Activated naive CD4-positive, alpha-beta T cell treated with anti-CD3 and anti-CD28 coated beads for 36 hours (primary cell): ENCODE measurements at regions of chr17 and their contacts with region 1.

Region 1: GRCh38 chr17:29732613-29733012 is 109.9 kb upstream of the CORO6 start:
- DNase-seq: no peak
- H3K4me3 Mint-ChIP-seq: no peak overlapping the region
- H3K27ac Mint-ChIP-seq: no peak overlapping the region
- H3K4me1 Mint-ChIP-seq: peaks cover 55% of the 10 kb centered on the region
- H3K27me3 Mint-ChIP-seq: no peaks in the 10 kb centered on the region

Region 2: DNA sequence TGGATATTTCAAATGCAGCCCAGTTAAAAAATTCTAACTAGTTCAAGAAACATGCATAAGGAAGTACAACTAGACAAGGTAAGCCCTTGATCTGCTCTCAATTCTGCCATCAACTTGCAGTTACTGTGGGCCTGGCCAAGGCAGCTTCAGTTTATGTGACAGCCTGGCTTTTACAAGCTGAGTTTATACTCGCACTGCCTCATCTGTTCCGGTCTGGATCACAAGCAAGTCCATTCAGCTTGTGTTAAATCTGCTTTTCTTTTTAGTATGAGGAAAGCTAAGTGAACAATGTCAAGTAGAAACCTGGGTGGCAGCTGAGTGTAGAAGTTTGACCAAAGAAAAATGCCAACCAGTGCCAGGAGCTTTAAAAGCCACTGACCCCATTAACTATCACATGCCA is 33.3 kb before region 1 on chr17:
- CTCF ChIA-PET with region 1: no interaction called
- intact Hi-C with region 1: no loop called
- DNase-seq: no peak
- H3K4me3 Mint-ChIP-seq: no peak overlapping the region
- H3K27ac Mint-ChIP-seq: no peak overlapping the region
- H3K4me1 Mint-ChIP-seq: peaks cover 18% of the 10 kb centered on the region
- H3K27me3 Mint-ChIP-seq: no peaks in the 10 kb centered on the region

Region 3: DNA sequence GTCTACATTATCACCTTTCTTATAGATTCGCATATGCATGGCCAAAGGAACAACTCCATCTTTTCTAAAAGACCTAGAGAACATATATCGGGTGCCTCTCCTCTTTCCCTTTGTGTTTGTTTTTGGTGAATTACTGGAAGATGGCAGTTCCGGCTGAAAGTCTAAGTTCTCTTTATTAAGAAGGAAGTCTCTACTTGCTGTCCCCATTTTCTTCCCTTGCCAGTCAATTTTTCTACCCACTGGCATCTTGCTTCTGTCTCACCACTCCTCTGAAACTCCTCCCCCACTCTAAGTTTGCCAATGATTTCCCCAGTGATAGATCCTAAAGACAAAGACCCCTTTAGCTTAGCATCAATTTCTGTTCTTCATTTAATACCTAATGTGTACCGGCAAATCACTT is 16.0 kb before region 1 on chr17:
- CTCF ChIA-PET with region 1: interaction called, 4 read pairs
- intact Hi-C with region 1: loop called (anchors 2 kb)
- DNase-seq: no peak
- H3K4me3 Mint-ChIP-seq: no peak overlapping the region
- H3K27ac Mint-ChIP-seq: no peak overlapping the region
- H3K4me1 Mint-ChIP-seq: peaks cover 68% of the 10 kb centered on the region
- H3K27me3 Mint-ChIP-seq: no peaks in the 10 kb centered on the region

Region 4: GRCh38 chr17:29760761-29761696 is 28.4 kb after region 1 on chr17:
- CTCF ChIA-PET with region 1: no interaction called
- intact Hi-C with region 1: no loop called
- DNase-seq: peak; percentile 95
- H3K4me3 Mint-ChIP-seq: peak overlapping the region; percentile 90
- H3K27ac Mint-ChIP-seq: peak overlapping the region; percentile 94
- H3K4me1 Mint-ChIP-seq: peaks cover 32% of the 10 kb centered on the region
- H3K27me3 Mint-ChIP-seq: no peaks in the 10 kb centered on the region